ENCODE measurements at regions of chr19 and their contacts with region 1.

Region 1: DNA sequence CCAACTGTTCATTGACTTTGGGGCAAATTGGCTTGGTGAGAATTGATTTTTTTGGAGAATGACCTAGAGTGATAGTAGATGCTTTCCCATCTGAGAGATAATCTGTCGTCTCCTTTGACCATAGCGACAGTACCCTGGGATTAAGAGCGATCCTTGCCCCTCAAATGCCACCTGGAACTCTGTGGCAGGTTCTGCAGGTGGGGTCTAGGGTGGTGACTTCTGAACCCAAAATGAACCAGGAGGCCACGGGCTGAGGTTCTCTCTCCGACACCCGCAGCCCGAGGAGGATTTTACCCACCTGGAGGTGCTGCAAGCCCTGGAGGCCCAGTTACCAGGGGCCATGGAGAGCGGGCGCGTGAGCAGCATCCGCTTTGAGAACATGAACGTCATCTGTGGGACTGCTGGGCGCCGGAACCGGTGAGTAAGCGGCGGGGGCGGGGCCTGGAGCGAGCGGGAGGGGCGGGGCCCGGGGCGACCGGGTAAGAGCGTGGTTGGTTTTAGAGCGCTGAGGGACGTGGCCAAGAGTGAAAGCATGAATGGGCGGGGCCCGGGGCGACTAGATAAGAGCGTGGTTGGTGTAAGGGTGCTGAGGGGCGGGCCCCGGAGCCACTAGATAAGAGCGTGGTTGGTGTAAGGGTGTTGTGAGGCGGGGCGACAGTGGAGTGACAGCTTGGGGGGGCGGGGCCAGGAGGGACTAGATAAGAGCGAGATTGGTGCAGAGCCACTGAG is 8.6 kb downstream of the C19orf81 start:
- DNase-seq: peak; percentile 98
- ATAC-seq: peak; percentile 96
- H3K4me3 Mint-ChIP-seq: peak overlapping the region; percentile 76
- H3K27ac Mint-ChIP-seq: peak overlapping the region; percentile 93
- H3K4me1 Mint-ChIP-seq: peaks cover 20% of the 10 kb centered on the region
- H3K27me3 Mint-ChIP-seq: peaks cover 65% of the 10 kb centered on the region

Region 2: GRCh38 chr19:50383852-50384684 is 273.8 kb before region 1 on chr19 and contains the start of gene POLD1:
- CTCF ChIA-PET with region 1: no interaction called
- POLR2A ChIA-PET with region 1: no interaction called
- intact Hi-C with region 1: loop called in 1 of 2 experiments (anchors 1 kb)
- DNase-seq: peak; percentile 100
- ATAC-seq: peak; percentile 92
- H3K4me3 Mint-ChIP-seq: peak within 1 kb of the TSS; percentile 99
- H3K27ac Mint-ChIP-seq: peak within 1 kb of the TSS; percentile 93
- H3K4me1 Mint-ChIP-seq: peaks cover 27% of the 10 kb centered on the region
- H3K27me3 Mint-ChIP-seq: no peaks in the 10 kb centered on the region
- total RNA-seq, gene POLD1: 220 to 227 TPM

Region 3: DNA sequence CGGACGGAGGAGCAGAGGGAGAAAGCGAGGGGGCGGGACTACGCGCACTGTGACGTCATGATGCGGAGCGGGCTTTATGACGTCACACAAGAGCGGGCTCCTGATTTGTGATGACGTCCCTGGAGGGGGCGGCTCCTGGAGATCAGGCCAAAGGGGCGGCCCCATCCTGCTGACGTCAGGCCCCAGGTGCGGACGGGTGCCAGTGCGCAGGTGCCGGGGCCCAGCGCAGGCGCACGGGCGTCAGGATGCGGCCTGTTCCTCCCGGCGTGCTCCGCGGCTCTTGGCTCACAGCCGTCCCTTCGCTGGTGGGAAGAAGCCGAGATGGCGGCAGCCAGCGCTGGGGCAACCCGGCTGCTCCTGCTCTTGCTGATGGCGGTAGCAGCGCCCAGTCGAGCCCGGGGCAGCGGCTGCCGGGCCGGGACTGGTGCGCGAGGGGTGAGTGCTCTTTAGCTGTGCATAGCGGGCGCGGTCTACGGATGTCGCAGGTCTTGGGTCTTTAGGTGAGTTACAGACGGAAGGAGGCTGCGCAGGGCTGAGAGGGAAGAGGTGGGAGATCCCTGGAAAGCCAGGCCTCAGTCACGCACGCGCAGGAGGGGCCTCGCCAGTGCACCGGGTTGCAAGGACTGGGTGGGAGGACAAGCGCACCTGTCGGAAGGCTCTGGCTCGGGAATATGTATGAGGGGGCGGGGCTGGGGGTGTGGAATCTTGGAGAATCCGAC is 181.5 kb before region 1 on chr19 and contains the starts of genes EMC10 and GARIN5A:
- CTCF ChIA-PET with region 1: no interaction called
- POLR2A ChIA-PET with region 1: no interaction called
- intact Hi-C with region 1: loop called in 1 of 2 experiments (anchors 1 kb)
- DNase-seq: peak; percentile 98
- ATAC-seq: peak; percentile 98
- H3K4me3 Mint-ChIP-seq: peak within 1 kb of the TSS; percentile 90
- H3K27ac Mint-ChIP-seq: peak within 1 kb of the TSS; percentile 84
- H3K4me1 Mint-ChIP-seq: peaks cover 18% of the 10 kb centered on the region
- H3K27me3 Mint-ChIP-seq: no peaks in the 10 kb centered on the region
- total RNA-seq, gene EMC10: 33.4 to 34.7 TPM
- total RNA-seq, gene GARIN5A: 0.48 to 0.58 TPM

Region 4: DNA sequence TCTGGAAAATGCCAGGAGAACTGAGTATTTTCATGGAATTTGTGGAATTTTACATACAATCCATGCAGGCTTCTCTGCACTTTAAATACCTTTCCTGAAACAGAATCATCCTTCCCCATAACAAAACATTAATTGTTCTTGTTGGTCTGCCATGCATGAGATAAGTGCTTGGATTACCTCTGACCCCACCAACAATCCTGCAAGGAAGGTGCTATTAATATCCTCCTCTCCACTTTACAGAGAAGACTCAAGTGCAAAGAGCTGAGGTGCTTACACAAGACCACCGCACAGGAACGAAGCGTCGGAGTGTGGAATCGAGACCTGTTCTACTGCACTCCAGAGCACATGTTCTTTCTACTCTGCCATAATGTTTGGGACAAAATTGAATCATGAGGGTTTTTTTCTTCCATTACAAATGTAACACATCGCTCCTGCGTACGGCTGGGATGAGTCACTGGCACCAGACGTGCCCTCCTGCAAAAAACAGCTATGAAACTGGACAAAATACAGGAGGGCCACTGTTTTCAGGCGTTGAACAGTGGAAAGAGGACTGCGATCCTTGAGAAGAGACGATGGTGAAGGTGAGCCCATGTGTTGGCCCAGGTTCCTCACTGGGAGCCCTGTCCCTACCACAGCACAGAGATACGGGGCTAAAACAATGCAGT is 76.8 kb before region 1 on chr19:
- CTCF ChIA-PET with region 1: no interaction called
- POLR2A ChIA-PET with region 1: no interaction called
- intact Hi-C with region 1: no loop called
- DNase-seq: no peak
- ATAC-seq: no peak
- H3K4me3 Mint-ChIP-seq: no peak overlapping the region
- H3K27ac Mint-ChIP-seq: no peak overlapping the region
- H3K4me1 Mint-ChIP-seq: no peaks in the 10 kb centered on the region
- H3K27me3 Mint-ChIP-seq: peaks cover 16% of the 10 kb centered on the region

Region 5: GRCh38 chr19:50607874-50608785 is 49.7 kb before region 1 on chr19:
- CTCF ChIA-PET with region 1: interaction called, 3 read pairs
- POLR2A ChIA-PET with region 1: no interaction called
- intact Hi-C with region 1: loop called in 1 of 2 experiments (anchors 1 kb)
- DNase-seq: peak; percentile 95
- ATAC-seq: peak; percentile 93
- H3K4me3 Mint-ChIP-seq: peak overlapping the region; percentile 5
- H3K27ac Mint-ChIP-seq: no peak overlapping the region
- H3K4me1 Mint-ChIP-seq: peaks cover 13% of the 10 kb centered on the region
- H3K27me3 Mint-ChIP-seq: peaks cover 35% of the 10 kb centered on the region

Region 6: DNA sequence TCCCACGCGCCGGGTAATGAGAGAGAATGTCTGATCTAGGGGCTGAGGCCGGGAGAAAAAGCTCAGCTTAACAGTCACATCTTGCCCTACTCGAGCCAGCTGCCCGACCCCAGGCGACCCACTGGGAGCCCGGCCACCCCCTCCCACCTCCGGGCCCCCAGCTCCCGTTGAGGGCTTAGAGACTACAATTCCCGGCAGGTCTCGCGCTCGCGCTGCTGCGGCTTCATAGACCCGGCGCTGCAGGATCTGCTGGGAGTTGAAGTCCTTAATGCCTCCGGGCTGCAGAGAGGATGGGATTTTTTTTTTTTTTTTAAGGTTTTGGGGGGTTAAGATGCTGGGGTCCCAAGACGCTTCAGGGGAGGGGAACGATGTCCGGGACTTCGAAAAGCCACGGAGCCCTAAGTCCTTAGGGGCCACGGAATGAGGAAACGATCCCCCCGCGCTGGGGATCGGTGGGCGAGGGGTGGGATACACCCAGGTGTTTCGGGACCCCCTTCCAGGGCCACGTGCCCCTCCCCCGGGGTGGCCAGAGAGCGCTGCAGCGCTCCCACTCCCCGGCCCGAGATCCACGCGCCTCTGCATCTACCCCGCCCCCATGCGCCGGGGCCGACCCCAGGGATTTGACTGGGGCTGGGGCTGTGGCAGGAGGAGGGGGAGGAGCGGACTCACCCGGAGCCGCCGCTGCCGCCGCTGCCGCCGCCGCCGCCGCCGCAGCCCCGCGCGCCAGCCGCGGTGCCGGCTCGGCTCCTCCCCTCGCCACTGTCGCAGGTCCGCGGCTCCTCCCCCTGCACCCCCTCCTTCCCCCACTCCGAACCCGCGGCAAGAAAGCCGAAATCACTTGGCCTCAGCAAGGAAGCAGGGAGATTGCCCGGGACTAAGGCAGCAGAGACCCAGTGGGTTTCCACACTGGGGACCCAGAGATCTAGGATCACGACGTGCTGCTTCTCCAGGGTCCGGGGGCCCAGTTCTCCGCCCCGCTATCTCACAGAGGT is 18.5 kb before region 1 on chr19 and contains the start of gene SYT3:
- CTCF ChIA-PET with region 1: no interaction called
- POLR2A ChIA-PET with region 1: no interaction called
- intact Hi-C with region 1: loop called in 1 of 2 experiments (anchors 1 kb)
- DNase-seq: peak; percentile 67
- ATAC-seq: peak; percentile 92
- H3K4me3 Mint-ChIP-seq: peak within 1 kb of the TSS; percentile 50
- H3K27ac Mint-ChIP-seq: no peak within 1 kb of the TSS
- H3K4me1 Mint-ChIP-seq: peaks cover 4% of the 10 kb centered on the region
- H3K27me3 Mint-ChIP-seq: peaks cover 34% of the 10 kb centered on the region
- total RNA-seq, gene SYT3: 0.11 to 0.16 TPM

Region 7: DNA sequence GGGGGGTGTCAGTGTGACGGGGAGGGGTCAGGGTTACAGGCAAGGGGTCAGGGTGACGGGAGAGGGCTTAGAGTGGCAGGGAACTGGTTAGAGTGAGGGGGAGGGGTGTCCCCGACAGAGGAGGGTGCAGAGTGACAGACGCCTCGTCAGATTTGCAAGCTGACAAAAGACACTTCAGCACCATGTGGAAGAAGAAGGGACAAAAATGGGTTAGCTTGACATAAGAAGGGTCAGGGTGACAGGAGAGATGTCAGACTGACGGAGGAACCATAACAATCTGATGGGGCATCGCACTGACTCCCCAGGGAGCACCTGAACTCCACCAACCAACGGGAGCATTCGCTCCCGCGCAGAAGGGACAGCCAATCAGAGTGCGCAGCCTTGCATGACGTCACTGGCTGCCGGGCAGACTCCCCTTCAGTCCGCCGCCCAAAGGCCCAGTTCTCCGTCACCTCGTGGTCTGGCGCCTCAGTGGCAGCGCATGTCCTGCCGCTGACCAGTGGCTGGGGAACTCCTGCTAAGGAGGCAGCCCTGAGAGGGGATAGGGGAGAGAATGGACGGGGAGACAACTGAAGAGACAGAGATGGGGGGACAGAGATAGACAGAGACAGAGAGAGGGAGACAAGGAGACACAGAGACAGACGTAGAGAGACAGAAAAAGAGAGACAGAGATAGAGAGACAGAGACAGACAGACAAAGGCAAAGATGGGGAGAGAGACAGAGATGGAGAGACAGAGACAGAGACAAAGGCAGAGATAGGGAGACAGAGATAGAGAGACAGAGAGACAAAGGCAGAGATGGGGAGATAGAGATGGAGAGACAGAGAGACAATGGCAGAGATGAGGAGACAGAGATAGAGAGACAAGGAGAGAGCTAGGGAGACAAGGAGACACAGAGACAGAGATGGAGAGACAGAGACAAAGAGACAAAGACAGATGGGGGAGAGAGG is 21.6 kb after region 1 on chr19:
- CTCF ChIA-PET with region 1: no interaction called
- POLR2A ChIA-PET with region 1: no interaction called
- intact Hi-C with region 1: loop called in 1 of 2 experiments (anchors 1 kb)
- DNase-seq: peak; percentile 91
- ATAC-seq: peak; percentile 98
- H3K4me3 Mint-ChIP-seq: no peak overlapping the region
- H3K27ac Mint-ChIP-seq: no peak overlapping the region
- H3K4me1 Mint-ChIP-seq: peaks cover 8% of the 10 kb centered on the region
- H3K27me3 Mint-ChIP-seq: peaks cover 36% of the 10 kb centered on the region

Region 8: GRCh38 chr19:50817941-50818858 is 160.3 kb after region 1 on chr19:
- CTCF ChIA-PET with region 1: no interaction called
- POLR2A ChIA-PET with region 1: no interaction called
- intact Hi-C with region 1: no loop called
- DNase-seq: peak; percentile 82
- ATAC-seq: peak; percentile 59
- H3K4me3 Mint-ChIP-seq: peak overlapping the region; percentile 73
- H3K27ac Mint-ChIP-seq: peak overlapping the region; percentile 83
- H3K4me1 Mint-ChIP-seq: peaks cover 45% of the 10 kb centered on the region
- H3K27me3 Mint-ChIP-seq: peaks cover 61% of the 10 kb centered on the region